Thyroid gland (tissue), 4 donors: ENCODE measurements at regions of chr12 and their contacts with region 1.

Region 1: GRCh38 chr12:30695199-30696103 is at the start of gene IPO8:
- DNase-seq: peak; percentile 91 to 95
- H3K4me3 ChIP-seq: peak within 1 kb of the TSS; percentile 78 to 98 (median 91)
- H3K27ac ChIP-seq: peak within 1 kb of the TSS; percentile 85 to 86 (median 85)
- H3K4me1 ChIP-seq: peaks cover 15 to 19% of the 10 kb centered on the region in 2 donors
- H3K27me3 ChIP-seq: no peaks in the 10 kb centered on the region
- CTCF ChIP-seq: peak in 4 of 6 experiments; percentile 3 to 43 (median 29)
- POLR2A ChIP-seq: peak in 1 of 2 donors; percentile 41
- total RNA-seq, gene IPO8: 45.1 to 58.2 (median 51.3) TPM

Region 2: GRCh38 chr12:30754709-30755394 is 59.4 kb after region 1 on chr12 and contains the start of gene CAPRIN2:
- intact Hi-C with region 1: loop called (anchors 10 kb)
- DNase-seq: peak; percentile 96 to 97
- H3K4me3 ChIP-seq: peak within 1 kb of the TSS; percentile 54 to 74 (median 63)
- H3K27ac ChIP-seq: peak within 1 kb of the TSS; percentile 65 to 82 (median 76)
- H3K4me1 ChIP-seq: peaks cover 8 to 9% of the 10 kb centered on the region in 2 donors
- H3K27me3 ChIP-seq: no peaks in the 10 kb centered on the region
- CTCF ChIP-seq: peak in 2 of 6 experiments; percentile 34 to 49
- POLR2A ChIP-seq: peak in 1 of 2 donors; percentile 87
- total RNA-seq, gene CAPRIN2: 32.3 to 96.3 (median 43.8) TPM